ENCODE measurements at regions of chr17 and their contacts with region 1.

Region 1: DNA sequence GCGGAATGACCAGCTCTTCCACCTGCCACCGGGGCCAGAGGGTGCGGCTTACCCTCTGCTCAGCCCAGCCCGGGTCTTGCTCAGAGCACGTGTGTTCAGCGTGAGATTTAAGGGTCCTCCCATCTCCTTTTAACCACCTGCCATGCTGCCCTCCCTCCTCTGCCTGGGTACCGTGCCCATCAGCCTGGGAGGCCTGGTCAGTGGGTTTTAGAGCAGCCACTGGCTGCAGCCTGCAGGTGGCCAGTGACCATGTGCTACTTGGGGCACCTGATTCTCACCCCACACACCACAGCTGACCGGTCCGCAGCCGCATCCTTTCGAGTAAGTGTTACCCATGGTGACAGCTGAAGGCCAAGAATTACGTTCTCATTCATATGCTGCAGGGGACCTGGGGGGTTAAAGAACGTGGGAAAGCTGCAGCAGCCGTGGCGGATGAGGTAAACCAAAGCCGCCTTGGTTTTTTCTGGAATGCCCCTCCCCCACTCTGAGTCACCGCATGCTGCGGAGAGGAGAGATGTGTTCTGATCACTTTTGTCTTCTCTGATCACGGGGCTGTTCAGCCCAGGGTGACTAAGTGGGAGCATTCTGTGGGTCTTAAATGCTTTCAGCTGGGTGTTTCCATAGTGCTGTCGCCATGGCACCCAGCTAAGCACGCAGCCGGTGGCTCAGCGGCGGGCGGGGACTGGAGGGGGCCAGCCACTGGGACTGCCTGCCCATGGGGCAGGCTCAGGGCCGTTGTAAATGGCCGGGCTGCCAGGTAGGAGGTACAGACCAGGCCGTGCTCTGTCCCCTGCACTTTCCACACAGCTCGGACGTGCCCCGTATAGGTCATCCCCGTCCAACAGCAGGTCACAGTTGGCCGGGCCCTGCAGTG is 59.8 kb downstream of the BAIAP2 start:
- DNase-seq: peak in 1 of 3 donors; percentile 66
- ATAC-seq: peak; percentile 14 to 51
- H3K4me3 ChIP-seq: no peak overlapping the region
- H3K27ac ChIP-seq: no peak overlapping the region
- H3K4me1 ChIP-seq: no peaks in the 10 kb centered on the region
- H3K27me3 ChIP-seq: no peaks in the 10 kb centered on the region

Region 2: DNA sequence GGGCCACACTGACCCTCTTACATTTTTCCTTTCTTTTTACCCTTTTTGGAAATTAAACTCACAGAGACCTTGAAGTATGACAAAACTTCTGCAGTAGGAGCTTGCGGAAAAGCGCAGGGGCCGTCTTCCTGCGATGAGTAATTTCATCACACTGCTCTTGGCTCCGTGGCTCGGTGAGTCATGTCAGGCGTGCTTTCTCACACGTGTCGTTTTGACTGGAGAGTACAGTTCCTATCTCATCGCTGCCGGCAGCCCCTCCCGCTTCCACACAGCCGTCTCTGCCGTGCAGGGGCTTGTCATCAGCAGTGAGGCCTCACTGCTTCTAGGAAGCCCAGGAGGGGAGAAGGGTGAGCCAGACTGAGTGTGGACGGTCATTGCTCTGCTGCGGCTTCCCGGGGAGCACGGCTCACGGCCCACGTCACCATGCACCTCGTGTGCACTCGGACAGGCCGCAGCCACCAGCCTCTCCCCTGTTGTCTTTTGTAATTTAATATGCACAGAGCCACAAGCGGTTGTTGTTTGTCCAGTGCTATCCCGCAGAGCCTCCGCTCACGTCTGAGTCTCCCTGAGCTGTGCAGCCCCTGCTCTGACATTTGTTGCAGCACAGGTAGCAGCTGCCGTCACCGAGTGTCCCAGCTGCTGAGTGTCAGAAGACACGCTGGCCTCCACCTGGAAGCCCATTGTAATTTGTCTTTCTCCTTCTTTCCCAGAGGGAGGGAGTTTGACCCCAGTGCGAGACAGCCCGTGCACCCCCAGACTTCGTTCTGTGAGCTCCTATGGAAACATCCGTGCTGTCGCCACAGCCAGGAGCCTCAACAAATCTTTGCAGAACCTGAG is 202.5 kb before region 1 on chr17:
- intact Hi-C with region 1: no loop called
- DNase-seq: peak; percentile 86 to 91 (median 88)
- ATAC-seq: peak; percentile 92 to 93
- H3K4me3 ChIP-seq: no peak overlapping the region
- H3K27ac ChIP-seq: peak overlapping the region; percentile 25
- H3K4me1 ChIP-seq: peaks cover 3% of the 10 kb centered on the region
- H3K27me3 ChIP-seq: no peaks in the 10 kb centered on the region

Region 3: DNA sequence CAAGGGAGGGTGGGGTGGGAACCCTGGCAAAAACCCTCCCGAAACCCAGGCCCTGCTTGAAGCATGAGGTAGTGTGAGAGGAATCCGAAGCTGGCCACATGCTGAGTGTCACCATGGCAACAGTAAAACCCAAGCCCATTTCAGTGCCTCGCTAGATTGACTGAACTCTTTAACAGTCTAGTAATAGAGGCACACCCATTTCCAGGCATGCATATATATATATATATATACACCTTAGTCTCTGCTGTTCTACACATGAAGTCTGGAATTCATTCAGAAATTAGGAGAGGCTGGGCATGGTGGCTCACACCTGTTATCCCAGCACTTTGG is 162.8 kb before region 1 on chr17:
- intact Hi-C with region 1: no loop called
- DNase-seq: no peak
- ATAC-seq: no peak
- H3K4me3 ChIP-seq: no peak overlapping the region
- H3K27ac ChIP-seq: no peak overlapping the region
- H3K4me1 ChIP-seq: no peaks in the 10 kb centered on the region
- H3K27me3 ChIP-seq: no peaks in the 10 kb centered on the region

Region 4: DNA sequence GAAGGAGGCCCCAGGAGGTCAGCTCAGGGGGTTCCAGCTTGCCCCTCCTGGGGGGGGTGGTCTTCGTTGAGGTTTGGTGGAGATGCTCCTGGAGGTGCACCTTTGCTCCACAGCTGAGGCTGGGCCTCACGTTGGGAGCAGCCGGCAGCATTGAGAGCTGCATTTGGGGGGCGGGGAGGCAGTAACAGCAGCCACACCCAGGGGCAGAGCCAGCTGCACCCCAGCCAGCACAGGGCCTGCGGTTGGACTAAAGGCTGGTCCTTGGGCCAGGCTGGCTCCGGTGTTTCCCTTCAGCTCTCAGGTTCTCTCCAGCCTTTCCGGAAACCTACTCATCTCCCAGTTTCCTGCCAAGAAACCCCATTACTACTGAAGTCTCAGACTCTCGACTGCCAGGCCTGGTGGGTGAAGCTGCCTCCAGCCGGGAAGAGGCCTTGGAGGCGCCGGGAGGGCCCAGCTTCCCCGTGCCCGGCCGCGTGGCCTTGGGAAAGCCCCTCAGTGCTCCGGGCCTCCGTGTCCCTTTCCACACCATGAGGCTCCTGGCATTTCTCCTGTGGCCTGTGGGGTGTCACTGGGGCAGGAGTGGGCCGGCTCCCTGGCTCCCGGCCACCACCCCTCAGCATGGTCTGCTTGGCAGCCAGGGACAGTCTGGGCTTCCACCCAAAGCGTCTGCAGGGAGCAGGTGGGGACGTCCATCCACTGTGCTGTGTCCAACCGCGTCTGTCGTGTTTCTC is 73.8 kb before region 1 on chr17:
- intact Hi-C with region 1: loop called in 2 of 4 experiments (anchors 5 kb)
- DNase-seq: peak; percentile 61 to 86 (median 83)
- ATAC-seq: peak; percentile 64 to 79
- H3K4me3 ChIP-seq: no peak overlapping the region
- H3K27ac ChIP-seq: no peak overlapping the region
- H3K4me1 ChIP-seq: no peaks in the 10 kb centered on the region
- H3K27me3 ChIP-seq: no peaks in the 10 kb centered on the region

Region 5: GRCh38 chr17:81027591-81028505 is 66.9 kb before region 1 on chr17:
- intact Hi-C with region 1: loop called in 2 of 4 experiments (anchors 5 kb)
- DNase-seq: peak in 2 of 3 donors; percentile 50 to 56
- ATAC-seq: no peak
- H3K4me3 ChIP-seq: no peak overlapping the region
- H3K27ac ChIP-seq: no peak overlapping the region
- H3K4me1 ChIP-seq: peaks cover 12% of the 10 kb centered on the region
- H3K27me3 ChIP-seq: no peaks in the 10 kb centered on the region

Region 6: GRCh38 chr17:81040791-81041337 is 53.9 kb before region 1 on chr17:
- intact Hi-C with region 1: no loop called
- DNase-seq: peak in 1 of 3 donors; percentile 71
- ATAC-seq: no peak
- H3K4me3 ChIP-seq: no peak overlapping the region
- H3K27ac ChIP-seq: no peak overlapping the region
- H3K4me1 ChIP-seq: peaks cover 31% of the 10 kb centered on the region
- H3K27me3 ChIP-seq: no peaks in the 10 kb centered on the region

Measured in right cardiac atrium (tissue), 5 donors.